Left ventricle myocardium superior (tissue), 1 donor: ENCODE measurements at regions of chr3 and their contacts with region 1.

Region 1: GRCh38 chr3:151838583-151839312 is 24.8 kb downstream of the AADAC start:
- DNase-seq: no peak
- ATAC-seq: peak; percentile 84

Region 2: DNA sequence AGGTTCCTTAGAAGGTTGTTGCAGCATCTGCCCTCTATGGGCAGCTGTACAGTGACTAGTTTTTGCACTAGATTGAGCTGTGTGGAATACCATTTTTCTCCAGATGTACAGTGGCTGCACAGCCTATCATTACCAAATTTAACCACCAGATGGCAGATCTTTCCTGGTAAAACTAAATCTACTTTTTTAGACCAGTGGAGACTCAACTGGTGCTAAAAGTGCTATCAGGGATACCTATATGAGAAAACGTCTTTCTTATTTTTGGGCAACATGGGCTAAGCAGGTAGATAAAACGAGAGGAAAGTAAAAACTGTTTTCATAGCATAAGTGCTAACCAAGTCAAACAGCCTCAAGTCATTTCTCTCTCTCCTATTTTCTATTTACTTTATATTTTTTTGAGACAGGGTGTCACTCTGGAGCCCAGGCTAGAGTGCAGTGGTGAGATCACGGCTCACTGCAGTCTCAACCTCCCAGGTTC is 399.1 kb before region 1 on chr3:
- intact Hi-C with region 1: loop called (anchors 10 kb)
- DNase-seq: no peak
- ATAC-seq: peak; percentile 76

Region 3: DNA sequence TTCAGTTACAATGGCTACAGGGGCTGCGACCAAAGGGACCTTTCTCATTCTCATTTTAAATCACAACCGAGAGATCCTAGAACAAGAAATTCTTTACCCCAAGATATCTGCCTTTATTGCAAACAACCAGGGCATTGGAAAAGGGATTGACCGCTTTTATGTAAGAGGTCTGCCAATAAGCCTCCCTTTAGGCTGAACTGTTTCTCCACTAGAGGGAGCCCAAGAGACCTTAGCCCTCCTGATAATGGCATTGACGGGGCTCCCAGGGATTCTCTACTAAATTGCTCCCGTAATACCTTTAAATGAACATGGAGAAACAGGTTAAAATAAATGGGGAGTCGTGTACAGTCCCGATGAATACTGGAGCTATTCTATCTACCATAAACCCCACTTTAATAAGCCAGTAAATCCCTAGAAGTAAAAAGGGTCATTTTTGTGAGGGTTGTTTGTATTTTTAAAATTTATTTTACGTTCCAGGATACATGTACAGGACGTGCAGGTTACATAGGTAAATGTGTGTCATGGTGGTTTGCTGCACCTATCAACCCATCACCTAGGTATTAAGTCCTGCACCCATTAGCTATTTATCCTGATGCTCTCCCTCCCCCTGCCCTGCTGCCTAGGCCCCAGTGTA is 370.3 kb before region 1 on chr3:
- intact Hi-C with region 1: loop called (anchors 2 kb)
- DNase-seq: no peak
- ATAC-seq: peak; percentile 72

Region 4: DNA sequence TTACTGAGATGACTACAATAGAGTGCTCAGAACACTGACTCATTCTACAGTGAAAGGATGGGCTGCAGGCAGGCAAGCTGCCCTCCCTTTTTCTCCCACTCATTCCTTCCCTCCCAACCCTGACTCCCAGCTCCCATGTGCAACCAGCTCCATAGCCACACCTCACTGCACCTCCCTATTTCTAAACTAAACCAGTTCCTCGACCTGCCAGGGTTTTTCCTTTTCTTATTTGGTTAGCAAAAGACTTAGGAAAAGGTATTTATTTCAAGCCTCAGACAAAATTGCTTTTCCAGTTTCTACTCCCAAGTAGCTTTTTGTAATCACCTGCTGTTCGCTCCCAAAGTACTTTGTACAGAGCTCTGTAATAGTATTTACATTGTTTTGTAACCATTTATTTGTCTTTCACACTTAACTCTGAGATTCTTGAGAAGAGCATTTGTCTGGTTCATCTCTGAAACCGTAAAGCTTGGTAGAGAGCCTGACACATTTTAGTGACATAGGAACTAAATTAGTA is 22.6 kb before region 1 on chr3:
- intact Hi-C with region 1: no loop called
- DNase-seq: no peak
- ATAC-seq: peak; percentile 41